ENCODE measurements at regions of chr1 and their contacts with region 1.

Region 1: DNA sequence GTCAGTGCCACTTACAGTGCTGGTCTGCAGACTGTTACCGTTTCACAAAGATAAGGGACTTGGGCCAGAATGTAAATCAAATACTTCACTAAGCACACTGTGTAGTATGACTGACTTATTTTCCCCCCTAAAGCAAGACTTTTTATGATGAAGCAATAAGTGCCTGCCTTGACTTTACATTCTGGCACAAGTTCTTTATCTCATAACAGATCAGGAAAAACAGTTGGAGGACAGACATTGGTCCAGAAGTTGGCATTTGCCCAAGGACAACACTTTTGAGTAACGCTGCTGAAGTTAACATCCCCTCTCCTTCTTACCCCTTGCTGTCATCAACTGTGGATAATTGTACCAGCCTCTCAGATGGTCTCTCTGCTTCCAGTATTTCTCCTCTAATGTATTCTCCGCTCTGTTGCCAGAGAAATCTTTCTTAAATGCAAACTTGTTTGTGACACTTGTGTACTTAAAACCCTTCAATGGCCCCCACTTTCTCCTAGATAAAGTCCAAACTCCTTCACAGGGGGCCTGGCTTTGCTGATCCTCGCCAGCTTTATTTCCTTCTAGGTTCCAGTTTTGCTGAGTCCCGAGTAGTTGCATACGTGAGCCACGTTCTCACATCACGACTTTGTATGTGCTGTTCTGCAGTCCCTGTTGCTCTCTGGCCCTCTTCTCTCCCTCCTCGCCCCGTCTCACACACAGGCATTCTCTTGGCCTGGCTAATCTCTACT is 45.7 kb downstream of the S1PR1 start:
- DNase-seq: no peak
- ATAC-seq: no peak
- H3K4me3 ChIP-seq: no peak overlapping the region
- H3K4me3 Mint-ChIP-seq: no peak overlapping the region
- H3K27ac ChIP-seq: peak overlapping the region; percentile 52 to 84
- H3K27ac Mint-ChIP-seq: peak overlapping the region; percentile 98
- H3K4me1 ChIP-seq: peaks cover 94% of the 10 kb centered on the region
- H3K4me1 Mint-ChIP-seq: peaks cover 96% of the 10 kb centered on the region
- H3K27me3 ChIP-seq: no peaks in the 10 kb centered on the region
- H3K27me3 Mint-ChIP-seq: no peaks in the 10 kb centered on the region
- CTCF ChIP-seq: no peak

Region 2: DNA sequence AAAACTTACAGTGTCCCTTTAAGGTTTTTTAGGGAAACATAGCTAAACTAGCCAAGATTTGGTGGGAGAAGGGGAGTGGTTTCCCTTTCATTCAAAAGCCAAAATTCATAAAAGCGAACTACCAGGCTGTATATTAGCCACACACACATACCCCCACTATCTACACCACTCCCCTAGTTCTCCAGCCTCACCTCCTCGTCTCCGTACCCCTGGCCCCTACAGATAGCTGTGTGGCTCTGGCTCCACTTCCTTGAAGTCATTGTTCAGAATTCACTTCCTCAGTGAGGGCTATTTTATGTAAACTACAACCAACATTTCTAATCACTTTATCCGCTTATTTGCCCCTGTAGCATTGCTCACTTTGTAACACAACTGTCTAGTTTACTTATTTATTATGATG is 251.6 kb before region 1 on chr1:
- CTCF ChIA-PET with region 1: interaction called, 3 read pairs
- POLR2A ChIA-PET with region 1: no interaction called
- intact Hi-C with region 1: loop called (anchors 1 to 5 kb)
- DNase-seq: no peak
- ATAC-seq: no peak
- H3K4me3 ChIP-seq: no peak overlapping the region
- H3K4me3 Mint-ChIP-seq: no peak overlapping the region
- H3K27ac ChIP-seq: no peak overlapping the region
- H3K27ac Mint-ChIP-seq: peak overlapping the region; percentile 16
- H3K4me1 ChIP-seq: peaks cover 44% of the 10 kb centered on the region
- H3K4me1 Mint-ChIP-seq: peaks cover 76% of the 10 kb centered on the region
- H3K27me3 ChIP-seq: no peaks in the 10 kb centered on the region
- H3K27me3 Mint-ChIP-seq: no peaks in the 10 kb centered on the region
- CTCF ChIP-seq: no peak

Region 3: GRCh38 chr1:101105877-101106276 is 176.6 kb before region 1 on chr1:
- CTCF ChIA-PET with region 1: no interaction called
- POLR2A ChIA-PET with region 1: no interaction called
- intact Hi-C with region 1: loop called in 1 of 2 experiments (anchors 2 kb)
- DNase-seq: no peak
- ATAC-seq: no peak
- H3K4me3 ChIP-seq: no peak overlapping the region
- H3K4me3 Mint-ChIP-seq: no peak overlapping the region
- H3K27ac ChIP-seq: no peak overlapping the region
- H3K27ac Mint-ChIP-seq: no peak overlapping the region
- H3K4me1 ChIP-seq: peaks cover 27% of the 10 kb centered on the region
- H3K4me1 Mint-ChIP-seq: peaks cover 37% of the 10 kb centered on the region
- H3K27me3 ChIP-seq: no peaks in the 10 kb centered on the region
- H3K27me3 Mint-ChIP-seq: no peaks in the 10 kb centered on the region
- CTCF ChIP-seq: no peak

Region 4: GRCh38 chr1:101187297-101187696 is 95.2 kb before region 1 on chr1:
- CTCF ChIA-PET with region 1: no interaction called
- POLR2A ChIA-PET with region 1: no interaction called
- intact Hi-C with region 1: no loop called
- DNase-seq: no peak
- ATAC-seq: no peak
- H3K4me3 ChIP-seq: no peak overlapping the region
- H3K4me3 Mint-ChIP-seq: no peak overlapping the region
- H3K27ac ChIP-seq: no peak overlapping the region
- H3K27ac Mint-ChIP-seq: no peak overlapping the region
- H3K4me1 ChIP-seq: no peaks in the 10 kb centered on the region
- H3K4me1 Mint-ChIP-seq: peaks cover 9% of the 10 kb centered on the region
- H3K27me3 ChIP-seq: no peaks in the 10 kb centered on the region
- H3K27me3 Mint-ChIP-seq: no peaks in the 10 kb centered on the region
- CTCF ChIP-seq: no peak

Region 5: DNA sequence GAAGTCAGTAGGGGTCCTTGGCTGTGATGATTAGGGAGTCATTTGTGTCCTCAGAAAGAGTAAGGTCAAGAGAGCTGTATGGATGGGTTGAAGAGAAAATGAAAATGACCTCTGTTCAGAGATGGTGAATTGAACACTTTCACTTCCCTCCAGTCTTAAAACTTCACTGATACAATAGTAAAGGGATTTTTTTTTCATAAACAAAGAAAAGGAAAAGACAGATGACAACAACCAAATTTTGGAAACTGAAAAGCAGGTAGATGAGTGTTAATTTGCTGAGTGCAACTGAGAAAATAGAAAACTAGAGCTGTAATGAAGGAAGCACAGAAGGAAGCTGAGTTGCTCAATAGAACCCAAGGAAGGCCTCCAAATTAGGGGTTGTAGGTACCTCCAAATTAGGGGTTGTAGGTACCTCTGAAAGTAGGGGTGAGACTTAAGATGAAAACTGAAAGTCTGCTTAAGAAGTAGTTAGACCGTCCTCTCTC is 60.5 kb before region 1 on chr1:
- CTCF ChIA-PET with region 1: no interaction called
- POLR2A ChIA-PET with region 1: no interaction called
- intact Hi-C with region 1: no loop called
- DNase-seq: no peak
- ATAC-seq: no peak
- H3K4me3 ChIP-seq: no peak overlapping the region
- H3K4me3 Mint-ChIP-seq: no peak overlapping the region
- H3K27ac ChIP-seq: no peak overlapping the region
- H3K27ac Mint-ChIP-seq: no peak overlapping the region
- H3K4me1 ChIP-seq: no peaks in the 10 kb centered on the region
- H3K4me1 Mint-ChIP-seq: peaks cover 8% of the 10 kb centered on the region
- H3K27me3 ChIP-seq: no peaks in the 10 kb centered on the region
- H3K27me3 Mint-ChIP-seq: no peaks in the 10 kb centered on the region
- CTCF ChIP-seq: no peak

Region 6: GRCh38 chr1:101262630-101263348 is 19.7 kb before region 1 on chr1:
- CTCF ChIA-PET with region 1: interaction called, 10 read pairs
- POLR2A ChIA-PET with region 1: interaction called, 10 read pairs
- intact Hi-C with region 1: loop called (anchors 1 to 2 kb)
- DNase-seq: peak in 3 of 9 experiments; percentile 22 to 67 (median 48)
- ATAC-seq: peak; percentile 49
- H3K4me3 ChIP-seq: peak overlapping the region in 1 of 2 experiments; percentile 7
- H3K4me3 Mint-ChIP-seq: peak overlapping the region; percentile 46
- H3K27ac ChIP-seq: peak overlapping the region in 1 of 2 experiments; percentile 52
- H3K27ac Mint-ChIP-seq: peak overlapping the region; percentile 65
- H3K4me1 ChIP-seq: peaks cover 89% of the 10 kb centered on the region
- H3K4me1 Mint-ChIP-seq: peaks cover 86% of the 10 kb centered on the region
- H3K27me3 ChIP-seq: no peaks in the 10 kb centered on the region
- H3K27me3 Mint-ChIP-seq: no peaks in the 10 kb centered on the region
- CTCF ChIP-seq: no peak

Region 7: GRCh38 chr1:101317590-101317989 is 35.1 kb after region 1 on chr1:
- CTCF ChIA-PET with region 1: no interaction called
- POLR2A ChIA-PET with region 1: no interaction called
- intact Hi-C with region 1: no loop called
- DNase-seq: peak in 1 of 9 experiments; percentile 21
- ATAC-seq: no peak
- H3K4me3 ChIP-seq: no peak overlapping the region
- H3K4me3 Mint-ChIP-seq: no peak overlapping the region
- H3K27ac ChIP-seq: no peak overlapping the region
- H3K27ac Mint-ChIP-seq: no peak overlapping the region
- H3K4me1 ChIP-seq: peaks cover 10% of the 10 kb centered on the region
- H3K4me1 Mint-ChIP-seq: peaks cover 15% of the 10 kb centered on the region
- H3K27me3 ChIP-seq: no peaks in the 10 kb centered on the region
- H3K27me3 Mint-ChIP-seq: no peaks in the 10 kb centered on the region
- CTCF ChIP-seq: no peak

Region 8: DNA sequence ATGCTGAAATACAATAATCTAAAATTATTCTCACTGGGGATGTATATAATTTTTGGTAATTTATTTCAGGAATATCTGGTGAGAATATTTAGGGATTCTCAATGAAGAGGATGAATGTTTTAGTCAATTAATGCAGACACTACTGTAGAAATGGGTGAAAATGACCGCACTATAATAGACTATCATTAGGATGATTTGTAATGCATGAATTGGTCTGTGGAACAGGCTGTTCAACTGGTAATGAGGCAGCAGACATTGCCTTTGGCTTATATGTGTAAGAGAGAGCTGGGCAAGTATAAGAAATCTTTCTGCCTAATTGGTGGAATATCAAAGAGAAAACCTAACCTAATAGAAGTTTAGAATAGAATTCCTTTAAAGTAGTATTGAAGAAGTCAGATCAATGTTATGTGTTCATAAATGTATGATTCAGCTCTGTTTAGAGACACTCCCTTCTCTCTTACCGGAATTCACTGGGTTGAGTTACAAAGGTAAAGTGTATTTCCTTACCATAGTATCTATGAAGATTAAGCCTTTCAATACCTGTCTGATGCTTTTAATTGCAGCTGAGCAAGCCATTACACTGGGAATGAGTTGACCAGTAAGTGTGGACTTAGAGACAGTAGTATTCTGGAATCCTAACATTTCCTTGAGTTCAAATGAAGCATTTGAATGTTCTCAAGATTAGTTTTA is 228.9 kb after region 1 on chr1:
- CTCF ChIA-PET with region 1: no interaction called
- POLR2A ChIA-PET with region 1: no interaction called
- intact Hi-C with region 1: no loop called
- DNase-seq: no peak
- ATAC-seq: no peak
- H3K4me3 ChIP-seq: no peak overlapping the region
- H3K4me3 Mint-ChIP-seq: no peak overlapping the region
- H3K27ac ChIP-seq: no peak overlapping the region
- H3K27ac Mint-ChIP-seq: no peak overlapping the region
- H3K4me1 ChIP-seq: no peaks in the 10 kb centered on the region
- H3K4me1 Mint-ChIP-seq: no peaks in the 10 kb centered on the region
- H3K27me3 ChIP-seq: no peaks in the 10 kb centered on the region
- H3K27me3 Mint-ChIP-seq: no peaks in the 10 kb centered on the region
- CTCF ChIP-seq: no peak